ENCODE measurements at regions of chr7 and their contacts with region 1.

Region 1: DNA sequence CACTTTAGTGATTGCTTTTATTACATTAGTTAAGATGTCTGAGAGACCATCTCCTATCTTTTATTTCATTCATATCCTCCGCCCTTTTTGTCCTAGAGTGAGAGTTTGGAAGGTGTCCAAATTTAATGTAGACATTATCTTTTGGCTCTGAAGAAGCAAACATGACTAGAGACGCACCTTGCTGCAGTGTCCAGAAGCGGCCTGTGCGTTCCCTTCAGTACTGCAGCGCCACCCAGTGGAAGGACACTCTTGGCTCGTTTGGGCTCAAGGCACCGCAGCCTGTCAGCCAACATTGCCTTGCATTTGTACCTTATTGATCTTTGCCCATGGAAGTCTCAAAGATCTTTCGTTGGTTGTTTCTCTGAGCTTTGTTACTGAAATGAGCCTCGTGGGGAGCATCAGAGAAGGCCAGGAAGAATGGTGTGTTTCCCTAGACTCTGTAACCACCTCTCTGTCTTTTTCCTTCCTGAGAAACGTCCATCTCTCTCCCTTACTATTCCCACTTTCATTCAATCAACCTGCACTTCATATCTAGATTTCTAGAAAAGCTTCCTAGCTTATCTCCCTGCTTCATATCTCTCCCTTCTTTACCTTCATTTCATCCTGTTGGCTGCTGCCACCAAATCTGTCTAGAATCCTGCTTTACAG is 10.4 kb upstream of the CLCN1 start:
- DNase-seq: peak in 1 of 2 experiments; percentile 88
- H3K4me3 ChIP-seq: no peak overlapping the region
- H3K27ac ChIP-seq: no peak overlapping the region
- H3K4me1 ChIP-seq: no peaks in the 10 kb centered on the region
- H3K27me3 ChIP-seq: no peaks in the 10 kb centered on the region
- CTCF ChIP-seq: peak; percentile 91 to 99 (median 96)
- EP300 ChIP-seq: no peak
- POLR2A ChIP-seq: no peak
- RAD21 ChIP-seq: peak; percentile 73 to 82

Region 2: GRCh38 chr7:143240291-143241168 is 65.0 kb before region 1 on chr7:
- CTCF ChIA-PET with region 1: interaction called, 91 read pairs
- POLR2A ChIA-PET with region 1: interaction called, 3 read pairs
- DNase-seq: peak in 1 of 2 experiments; percentile 58
- H3K4me3 ChIP-seq: no peak overlapping the region
- H3K27ac ChIP-seq: no peak overlapping the region
- H3K4me1 ChIP-seq: no peaks in the 10 kb centered on the region
- H3K27me3 ChIP-seq: no peaks in the 10 kb centered on the region; a peak in 1 of 7 replicates
- CTCF ChIP-seq: peak; percentile 15 to 85 (median 83)
- EP300 ChIP-seq: no peak
- POLR2A ChIP-seq: no peak
- RAD21 ChIP-seq: peak; percentile 87 to 92

Region 3: DNA sequence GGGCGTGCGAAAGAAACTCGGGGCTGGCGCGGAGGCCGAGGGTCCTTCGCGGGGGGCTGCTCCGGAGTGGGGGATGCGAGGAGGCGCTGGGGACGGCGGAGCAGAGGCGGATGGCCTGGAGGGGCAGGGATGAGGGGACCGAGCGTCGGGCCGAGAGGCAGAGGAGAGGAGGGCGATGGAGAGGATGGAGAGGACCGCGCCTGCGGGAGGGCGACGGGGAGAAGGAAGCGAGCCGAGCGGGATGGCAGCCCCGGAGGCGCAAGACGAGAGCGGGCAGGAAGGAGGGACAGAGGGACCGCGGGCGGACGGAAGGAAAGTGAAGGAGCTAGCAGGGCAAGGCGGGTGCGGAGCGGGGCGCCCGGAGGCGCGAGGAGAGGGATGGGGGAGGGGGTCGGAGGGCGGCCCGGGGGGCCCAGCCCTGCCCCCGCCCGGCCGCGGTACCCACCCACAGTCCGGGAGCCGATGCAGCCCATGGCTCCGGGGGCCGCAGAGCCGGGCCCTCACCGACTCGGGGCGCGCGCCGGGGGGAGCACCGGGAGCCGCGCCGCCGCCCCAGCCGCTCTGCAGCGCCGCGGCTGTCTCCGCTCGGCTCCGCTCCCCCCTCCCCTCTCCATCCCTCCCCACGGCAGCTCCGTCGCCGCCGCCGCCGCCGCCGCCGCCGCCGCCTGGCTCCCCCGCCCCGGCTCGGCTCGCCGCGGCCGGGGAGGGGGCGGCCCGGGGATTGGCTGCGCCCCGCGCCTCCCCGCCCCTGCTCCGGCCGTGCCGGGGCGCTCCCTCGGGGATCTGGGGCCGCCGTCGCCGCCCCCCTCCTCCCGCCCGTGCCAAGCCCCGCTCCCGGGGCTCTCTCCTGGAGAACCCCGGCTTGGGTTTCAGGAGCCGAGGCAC is 56.8 kb after region 1 on chr7 and contains the start of gene FAM131B:
- CTCF ChIA-PET with region 1: interaction called, 29 read pairs
- POLR2A ChIA-PET with region 1: no interaction called
- DNase-seq: peak in 1 of 2 experiments; percentile 76
- H3K4me3 ChIP-seq: peak within 1 kb of the TSS; percentile 80 to 98 (median 80)
- H3K27ac ChIP-seq: no peak within 1 kb of the TSS
- H3K4me1 ChIP-seq: peaks cover 4 to 12% (median 10%) of the 10 kb centered on the region in 4 experiments
- H3K27me3 ChIP-seq: peaks cover 0 to 13% (median 8%) of the 10 kb centered on the region in 4 experiments; a peak in 4 of 7 replicates
- CTCF ChIP-seq: no peak
- EP300 ChIP-seq: no peak
- POLR2A ChIP-seq: no peak
- RAD21 ChIP-seq: no peak
- total RNA-seq, gene FAM131B: 35.5 and 38.2 TPM in 2 replicates

Region 4: DNA sequence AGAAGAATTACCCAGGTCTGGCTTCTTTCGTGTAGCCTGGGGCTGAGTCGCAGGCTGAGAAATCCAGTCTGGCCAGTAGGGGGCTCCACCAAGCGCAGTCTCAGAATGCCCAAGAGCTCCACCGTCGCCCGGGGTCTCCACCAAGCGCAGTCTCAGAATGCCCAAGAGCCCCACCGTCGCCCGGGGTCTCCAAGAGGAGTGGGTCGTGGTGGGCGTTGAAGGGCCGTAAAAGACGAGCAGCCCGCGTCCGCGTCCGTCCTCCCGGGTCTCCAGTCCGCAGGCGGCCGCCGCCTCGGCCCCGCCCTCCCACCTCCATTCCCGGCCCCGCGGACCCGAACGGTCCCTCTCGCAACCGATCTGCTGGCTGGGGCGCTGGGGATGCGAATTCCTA is 74.7 kb after region 1 on chr7:
- CTCF ChIA-PET with region 1: interaction called, 14 read pairs
- POLR2A ChIA-PET with region 1: no interaction called
- DNase-seq: peak; percentile 50 to 96
- H3K4me3 ChIP-seq: peak overlapping the region; percentile 76 to 100 (median 88)
- H3K27ac ChIP-seq: peak overlapping the region; percentile 93
- H3K4me1 ChIP-seq: peaks cover 5 to 17% (median 6%) of the 10 kb centered on the region in 4 experiments
- H3K27me3 ChIP-seq: no peaks in the 10 kb centered on the region
- CTCF ChIP-seq: peak in 2 of 3 experiments; percentile 74 to 75; a peak in 3 of 4 replicates
- EP300 ChIP-seq: no peak
- POLR2A ChIP-seq: no peak; a peak in 2 of 3 replicates
- RAD21 ChIP-seq: peak; percentile 37 to 57

Region 5: DNA sequence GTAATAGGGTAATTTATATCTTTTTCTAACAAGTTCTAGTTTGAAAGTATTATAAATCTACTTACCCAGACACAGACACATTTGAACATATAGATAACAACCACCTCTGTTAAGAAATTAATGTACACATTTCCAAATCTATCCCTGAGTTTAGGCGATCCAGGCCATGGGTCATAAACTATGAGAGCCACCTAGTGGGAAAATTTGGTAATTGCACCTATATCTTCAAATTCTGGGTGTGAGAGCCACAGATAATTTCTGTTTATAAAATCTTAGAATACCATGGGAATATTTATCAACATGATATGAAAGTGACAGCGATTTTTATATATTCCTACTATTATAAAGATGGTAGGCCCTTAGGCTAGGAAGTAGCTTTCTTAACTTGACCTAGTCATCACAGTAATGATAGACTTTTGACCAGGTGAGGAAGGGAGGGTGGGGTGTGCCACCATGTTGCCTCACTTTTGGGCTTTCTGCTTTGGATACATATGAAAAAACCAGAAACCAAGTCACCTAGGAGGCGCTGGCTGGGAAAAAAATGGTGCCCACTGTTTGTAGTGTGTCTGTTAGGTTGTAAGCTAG is 111.1 kb after region 1 on chr7:
- CTCF ChIA-PET with region 1: interaction called, 22 read pairs
- POLR2A ChIA-PET with region 1: no interaction called
- DNase-seq: no peak
- H3K4me3 ChIP-seq: no peak overlapping the region
- H3K27ac ChIP-seq: no peak overlapping the region
- H3K4me1 ChIP-seq: peaks cover 3 to 8% (median 6%) of the 10 kb centered on the region in 4 experiments; a peak in 6 of 7 replicates
- H3K27me3 ChIP-seq: no peaks in the 10 kb centered on the region
- CTCF ChIP-seq: peak in 2 of 3 experiments; percentile 45 to 48; a peak in 3 of 4 replicates
- EP300 ChIP-seq: no peak
- POLR2A ChIP-seq: no peak
- RAD21 ChIP-seq: peak; percentile 50 to 56

Measured in H1 (cell line).